Activated naive CD4-positive, alpha-beta T cell treated with anti-CD3 and anti-CD28 coated beads for 36 hours (primary cell): ENCODE measurements at regions of chr14 and their contacts with region 1.

Region 1: GRCh38 chr14:102524466-102525218 is 15.1 kb upstream of the ANKRD9 start:
- DNase-seq: peak; percentile 97
- H3K4me3 Mint-ChIP-seq: peak overlapping the region; percentile 83
- H3K27ac Mint-ChIP-seq: peak overlapping the region; percentile 56
- H3K4me1 Mint-ChIP-seq: peaks cover 28% of the 10 kb centered on the region
- H3K27me3 Mint-ChIP-seq: no peaks in the 10 kb centered on the region

Region 2: DNA sequence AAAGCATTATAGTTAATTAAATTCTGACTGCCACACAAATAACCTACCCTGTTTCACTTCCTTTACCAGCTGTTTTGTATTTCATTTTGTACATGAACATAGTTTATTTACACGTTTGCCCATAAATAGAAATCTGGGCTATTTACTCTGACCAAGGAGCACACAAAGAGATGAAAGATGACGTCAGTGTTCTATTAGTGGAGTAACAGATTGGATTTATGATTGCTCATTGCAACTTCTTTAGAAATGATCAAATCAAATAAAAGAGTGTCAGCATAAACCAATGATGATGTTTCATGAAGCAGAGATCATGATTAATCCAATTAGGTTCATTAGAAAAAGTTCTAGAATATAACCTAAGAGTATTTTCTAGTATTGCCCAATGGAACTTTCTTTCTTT is 1609.1 kb before region 1 on chr14:
- CTCF ChIA-PET with region 1: no interaction called
- intact Hi-C with region 1: no loop called
- DNase-seq: no peak
- H3K4me3 Mint-ChIP-seq: no peak overlapping the region
- H3K27ac Mint-ChIP-seq: no peak overlapping the region
- H3K4me1 Mint-ChIP-seq: no peaks in the 10 kb centered on the region
- H3K27me3 Mint-ChIP-seq: peaks cover 13% of the 10 kb centered on the region

Region 3: GRCh38 chr14:102568114-102568621 is 43.5 kb after region 1 on chr14:
- CTCF ChIA-PET with region 1: no interaction called
- intact Hi-C with region 1: loop called (anchors 2 kb)
- DNase-seq: peak; percentile 78
- H3K4me3 Mint-ChIP-seq: peak overlapping the region; percentile 62
- H3K27ac Mint-ChIP-seq: peak overlapping the region; percentile 88
- H3K4me1 Mint-ChIP-seq: peaks cover 11% of the 10 kb centered on the region
- H3K27me3 Mint-ChIP-seq: no peaks in the 10 kb centered on the region

Region 4: GRCh38 chr14:102694530-102695166 is 170.0 kb after region 1 on chr14:
- CTCF ChIA-PET with region 1: interaction called, 8 read pairs
- intact Hi-C with region 1: loop called (anchors 2 kb)
- DNase-seq: peak; percentile 78
- H3K4me3 Mint-ChIP-seq: no peak overlapping the region
- H3K27ac Mint-ChIP-seq: no peak overlapping the region
- H3K4me1 Mint-ChIP-seq: peaks cover 19% of the 10 kb centered on the region
- H3K27me3 Mint-ChIP-seq: no peaks in the 10 kb centered on the region

Region 5: DNA sequence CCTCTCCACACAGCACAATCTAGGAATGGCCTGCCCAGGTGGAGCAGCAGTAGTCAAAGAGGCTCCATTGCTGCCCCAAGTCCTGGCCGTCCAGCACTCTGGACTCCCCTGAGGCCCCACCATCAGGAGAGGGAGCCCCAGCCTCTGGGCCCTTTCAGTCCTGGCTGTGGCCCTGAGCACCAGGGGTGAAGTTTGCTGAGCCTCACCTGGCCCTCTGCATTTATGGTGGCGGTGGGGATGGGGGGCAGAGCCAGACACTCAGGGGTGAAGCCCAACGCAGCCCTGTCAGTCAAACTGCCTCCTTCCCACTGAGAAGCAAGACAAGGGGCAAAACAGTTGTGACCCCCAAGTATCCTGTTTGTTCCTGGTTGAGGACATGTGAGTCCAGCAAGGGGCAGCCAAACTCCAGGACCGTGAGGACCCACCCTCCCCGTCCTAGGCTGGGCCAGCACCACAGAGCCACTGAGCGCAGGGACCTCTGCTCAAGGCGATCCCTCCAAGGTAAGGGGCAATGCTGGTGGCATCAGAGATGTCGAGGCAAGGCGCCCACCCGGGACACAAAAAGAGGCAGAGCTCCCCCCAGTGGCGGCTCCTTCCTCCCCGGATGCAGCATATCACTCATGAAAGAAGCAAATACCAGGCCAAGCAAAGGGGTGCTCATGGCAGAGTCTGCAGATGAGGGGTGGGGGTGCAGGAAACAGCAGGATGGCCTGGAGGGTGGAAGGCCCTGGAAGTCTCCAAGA is 393.0 kb after region 1 on chr14:
- CTCF ChIA-PET with region 1: no interaction called
- intact Hi-C with region 1: loop called (anchors 2 kb)
- DNase-seq: peak; percentile 80
- H3K4me3 Mint-ChIP-seq: no peak overlapping the region
- H3K27ac Mint-ChIP-seq: no peak overlapping the region
- H3K4me1 Mint-ChIP-seq: no peaks in the 10 kb centered on the region
- H3K27me3 Mint-ChIP-seq: no peaks in the 10 kb centered on the region

Region 6: DNA sequence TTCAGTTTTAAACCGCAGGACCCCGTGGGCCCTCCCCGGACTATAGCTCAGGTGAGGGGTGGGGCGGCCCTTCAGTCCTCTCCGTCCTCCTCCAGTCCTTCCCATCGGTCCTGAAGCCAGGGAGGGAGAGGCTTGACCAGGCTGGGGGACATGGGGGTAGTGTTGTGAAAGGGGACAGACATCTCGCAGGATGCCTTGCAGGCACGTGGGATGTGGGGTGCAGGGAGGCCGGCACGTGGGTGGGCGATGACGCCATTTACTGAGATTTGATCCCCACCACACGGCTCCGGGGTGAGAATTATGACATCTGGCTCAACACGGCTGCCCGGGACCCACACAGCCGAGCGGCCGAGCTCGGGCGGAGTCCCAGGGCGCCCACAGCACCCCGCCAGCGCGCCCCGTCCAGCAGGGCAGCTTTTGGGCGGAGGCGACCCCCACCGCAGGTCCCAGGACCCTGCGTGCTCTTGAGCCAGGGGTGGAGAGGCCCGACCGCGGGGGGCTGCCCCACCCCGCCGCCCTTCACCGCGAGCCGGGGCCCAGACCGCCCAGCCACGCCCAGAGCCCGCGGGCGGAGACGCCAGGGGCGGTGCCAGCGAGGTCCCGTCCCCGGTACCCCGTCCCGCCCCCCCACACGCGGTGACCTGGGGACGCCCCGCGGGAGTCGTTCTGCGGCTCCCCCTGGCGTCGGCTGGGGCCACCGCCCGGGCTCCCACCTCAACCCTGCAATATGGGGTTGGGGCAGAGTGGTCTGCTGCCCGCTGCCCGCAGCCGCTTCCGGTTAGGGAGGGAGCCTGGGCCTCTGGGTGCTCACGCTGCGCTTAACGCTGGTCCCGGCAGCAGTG is 566.6 kb after region 1 on chr14:
- CTCF ChIA-PET with region 1: no interaction called
- intact Hi-C with region 1: loop called (anchors 10 kb)
- DNase-seq: peak; percentile 76
- H3K4me3 Mint-ChIP-seq: peak overlapping the region; percentile 29
- H3K27ac Mint-ChIP-seq: no peak overlapping the region
- H3K4me1 Mint-ChIP-seq: peaks cover 3% of the 10 kb centered on the region
- H3K27me3 Mint-ChIP-seq: no peaks in the 10 kb centered on the region